PC-9 (cell line): ENCODE measurements at regions of chr19 and their contacts with region 1.

Region 1: DNA sequence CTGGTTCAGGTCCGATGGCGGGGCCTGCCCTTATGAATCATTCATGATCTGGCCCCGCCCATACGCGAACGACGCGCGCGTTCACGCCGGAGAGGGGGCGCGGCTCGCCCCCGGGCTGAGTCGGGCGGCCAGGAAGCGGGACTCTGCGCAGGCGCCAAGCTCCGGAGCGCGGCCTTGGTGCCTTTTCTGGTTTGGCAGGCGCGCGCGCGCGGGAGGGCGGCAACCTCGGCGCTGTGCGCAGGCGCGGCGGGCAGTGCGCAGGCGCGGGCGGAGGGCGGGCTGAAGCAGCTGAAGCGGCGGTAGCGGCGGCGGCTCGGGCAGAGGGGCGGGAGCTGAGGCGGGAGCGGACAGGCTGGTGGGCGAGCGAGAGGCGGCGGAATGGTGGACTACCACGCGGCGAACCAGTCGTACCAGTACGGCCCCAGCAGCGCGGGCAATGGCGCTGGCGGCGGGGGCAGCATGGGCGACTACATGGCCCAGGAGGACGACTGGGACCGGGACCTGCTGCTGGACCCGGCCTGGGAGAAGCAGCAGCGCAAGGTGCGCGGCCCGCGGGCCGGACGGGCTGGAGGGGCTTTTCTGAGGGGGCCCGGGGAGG is at the start of gene ACTN4:
- DNase-seq: peak; percentile 86 to 100
- H3K4me3 ChIP-seq: peak within 1 kb of the TSS; percentile 100
- H3K27ac ChIP-seq: peak within 1 kb of the TSS; percentile 99
- H3K4me1 ChIP-seq: peaks cover 24% of the 10 kb centered on the region
- H3K27me3 ChIP-seq: no peaks in the 10 kb centered on the region
- CTCF ChIP-seq: no peak
- total RNA-seq, gene ACTN4: 1,066 and 1,233 TPM in 2 replicates

Region 2: GRCh38 chr19:37655689-37656371 is 991.6 kb before region 1 on chr19:
- CTCF ChIA-PET with region 1: interaction called, 12 read pairs
- POLR2A ChIA-PET with region 1: no interaction called
- intact Hi-C with region 1: no loop called
- DNase-seq: peak; percentile 69 to 82
- H3K4me3 ChIP-seq: peak overlapping the region; percentile 67
- H3K27ac ChIP-seq: peak overlapping the region; percentile 58
- H3K4me1 ChIP-seq: peaks cover 18% of the 10 kb centered on the region
- H3K27me3 ChIP-seq: no peaks in the 10 kb centered on the region
- CTCF ChIP-seq: no peak

Region 3: GRCh38 chr19:38015216-38015615 is 632.3 kb before region 1 on chr19:
- CTCF ChIA-PET with region 1: no interaction called
- POLR2A ChIA-PET with region 1: interaction called, 11 read pairs
- intact Hi-C with region 1: no loop called
- DNase-seq: peak; percentile 69 to 93
- H3K4me3 ChIP-seq: no peak overlapping the region
- H3K27ac ChIP-seq: peak overlapping the region; percentile 78
- H3K4me1 ChIP-seq: peaks cover 18% of the 10 kb centered on the region
- H3K27me3 ChIP-seq: no peaks in the 10 kb centered on the region
- CTCF ChIP-seq: no peak

Region 4: GRCh38 chr19:38538793-38539528 is 108.5 kb before region 1 on chr19:
- CTCF ChIA-PET with region 1: no interaction called
- POLR2A ChIA-PET with region 1: no interaction called
- intact Hi-C with region 1: no loop called
- DNase-seq: peak in 1 of 2 experiments; percentile 59
- H3K4me3 ChIP-seq: no peak overlapping the region
- H3K27ac ChIP-seq: peak overlapping the region; percentile 48
- H3K4me1 ChIP-seq: peaks cover 21% of the 10 kb centered on the region
- H3K27me3 ChIP-seq: no peaks in the 10 kb centered on the region; the same call in 1 of the 2 replicates
- CTCF ChIP-seq: no peak

Region 5: GRCh38 chr19:38666663-38667511 is 19.4 kb after region 1 on chr19:
- CTCF ChIA-PET with region 1: no interaction called
- POLR2A ChIA-PET with region 1: interaction called, 6 read pairs
- intact Hi-C with region 1: loop called (anchors 1 kb)
- DNase-seq: no peak
- H3K4me3 ChIP-seq: no peak overlapping the region
- H3K27ac ChIP-seq: peak overlapping the region; percentile 66
- H3K4me1 ChIP-seq: peaks cover 66% of the 10 kb centered on the region
- H3K27me3 ChIP-seq: no peaks in the 10 kb centered on the region
- CTCF ChIP-seq: no peak

Region 6: GRCh38 chr19:38693380-38694223 is 46.1 kb after region 1 on chr19:
- CTCF ChIA-PET with region 1: no interaction called
- POLR2A ChIA-PET with region 1: interaction called, 7 read pairs
- intact Hi-C with region 1: loop called (anchors 1 kb)
- DNase-seq: peak; percentile 88 to 94
- H3K4me3 ChIP-seq: peak overlapping the region; percentile 49; the same call in 1 of the 2 replicates
- H3K27ac ChIP-seq: peak overlapping the region; percentile 100
- H3K4me1 ChIP-seq: peaks cover 65% of the 10 kb centered on the region
- H3K27me3 ChIP-seq: no peaks in the 10 kb centered on the region
- CTCF ChIP-seq: no peak

Region 7: GRCh38 chr19:38736413-38737280 is 89.2 kb after region 1 on chr19:
- CTCF ChIA-PET with region 1: interaction called, 4 read pairs
- POLR2A ChIA-PET with region 1: interaction called, 10 read pairs
- intact Hi-C with region 1: no loop called
- DNase-seq: peak in 1 of 2 experiments; percentile 47
- H3K4me3 ChIP-seq: peak overlapping the region; percentile 49; the same call in 1 of the 2 replicates
- H3K27ac ChIP-seq: peak overlapping the region; percentile 41; the same call in 1 of the 2 replicates
- H3K4me1 ChIP-seq: peaks cover 30% of the 10 kb centered on the region
- H3K27me3 ChIP-seq: no peaks in the 10 kb centered on the region
- CTCF ChIP-seq: no peak

Region 8: GRCh38 chr19:38784224-38784623 is 136.8 kb after region 1 on chr19:
- CTCF ChIA-PET with region 1: no interaction called
- POLR2A ChIA-PET with region 1: no interaction called
- intact Hi-C with region 1: no loop called
- DNase-seq: peak in 1 of 2 experiments; percentile 33
- H3K4me3 ChIP-seq: no peak overlapping the region
- H3K27ac ChIP-seq: no peak overlapping the region
- H3K4me1 ChIP-seq: no peaks in the 10 kb centered on the region
- H3K27me3 ChIP-seq: no peaks in the 10 kb centered on the region
- CTCF ChIP-seq: no peak

Region 9: DNA sequence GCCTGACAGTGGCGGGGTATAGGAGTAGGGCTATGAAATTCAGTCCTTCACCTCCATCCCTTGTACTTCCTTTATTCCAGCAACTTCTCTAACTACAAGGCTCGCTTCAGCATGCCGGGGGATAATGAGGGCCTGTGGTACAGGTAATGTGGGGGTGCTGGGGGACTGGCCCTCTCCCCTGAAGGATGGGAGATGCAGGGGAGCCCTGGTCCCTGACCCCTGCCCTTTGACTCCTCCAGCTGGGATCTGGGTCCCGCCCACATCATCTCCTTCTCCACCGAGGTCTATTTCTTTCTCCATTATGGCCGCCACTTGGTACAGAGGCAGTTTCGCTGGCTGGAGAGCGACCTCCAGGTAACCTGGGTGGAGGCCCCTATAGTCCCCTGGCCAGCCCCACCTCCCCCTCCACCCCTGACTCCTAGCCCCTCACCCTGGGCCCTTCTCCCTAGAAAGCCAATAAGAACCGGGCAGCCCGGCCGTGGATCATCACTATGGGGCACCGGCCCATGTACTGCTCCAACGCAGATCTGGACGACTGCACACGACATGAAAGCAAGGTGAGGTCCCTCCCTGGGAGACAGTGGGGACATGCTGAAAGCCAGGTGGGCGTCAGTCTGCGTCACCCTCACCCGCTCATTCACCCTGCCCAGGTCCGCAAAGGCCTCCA is 453.2 kb after region 1 on chr19:
- CTCF ChIA-PET with region 1: interaction called, 10 read pairs
- POLR2A ChIA-PET with region 1: no interaction called
- intact Hi-C with region 1: no loop called
- DNase-seq: no peak
- H3K4me3 ChIP-seq: no peak overlapping the region
- H3K27ac ChIP-seq: no peak overlapping the region
- H3K4me1 ChIP-seq: no peaks in the 10 kb centered on the region
- H3K27me3 ChIP-seq: no peaks in the 10 kb centered on the region
- CTCF ChIP-seq: no peak